ENCODE measurements at regions of chr12 and their contacts with region 1.

Region 1: DNA sequence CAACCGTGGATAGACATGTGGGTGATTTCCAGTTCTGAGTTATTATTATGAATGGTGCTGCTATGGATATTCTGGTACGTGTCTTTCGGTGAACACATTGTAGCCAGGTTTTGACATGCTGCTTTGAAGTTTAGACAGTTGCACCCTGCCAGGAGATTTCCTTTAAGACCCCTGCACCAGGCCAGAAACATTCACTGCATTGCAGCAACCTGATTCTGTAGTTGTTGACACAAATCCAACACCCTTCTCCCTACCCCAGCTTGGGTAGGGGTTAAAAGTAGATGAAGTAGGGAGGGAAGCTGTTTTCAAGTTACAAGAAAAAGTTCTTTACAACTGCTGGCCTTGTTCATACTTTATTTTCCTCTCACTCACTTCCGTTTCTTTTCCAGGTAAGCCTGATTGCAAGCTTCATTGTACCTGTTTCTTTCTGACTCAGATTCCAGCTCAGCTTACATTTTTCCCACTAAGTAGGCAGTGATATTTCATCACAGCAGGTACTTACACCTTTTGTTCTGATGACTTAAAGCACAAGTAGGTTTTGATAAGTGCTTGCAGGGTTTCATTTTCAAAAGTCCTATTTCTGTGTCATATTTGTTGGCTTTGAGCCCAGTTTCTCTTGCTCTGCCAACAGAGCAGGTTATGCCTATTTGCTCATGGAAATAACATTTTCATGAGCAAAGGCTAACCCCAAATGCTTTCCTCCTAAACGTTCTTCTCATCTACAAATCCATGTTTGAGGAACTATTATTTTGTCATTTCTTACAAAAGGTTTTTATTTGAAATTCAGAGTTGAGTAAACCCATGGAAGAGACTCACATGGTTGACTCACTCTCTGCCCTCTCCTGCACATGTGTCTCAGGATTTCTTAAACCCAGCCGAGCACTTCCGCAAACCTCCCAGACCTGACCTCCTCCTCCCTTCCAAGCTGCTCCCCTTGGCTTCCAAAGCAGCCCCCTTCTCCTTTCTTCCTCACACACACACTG is 12.1 kb upstream of the LTA4H start:
- DNase-seq: peak; percentile 36
- H3K4me3 Mint-ChIP-seq: peak overlapping the region; percentile 31
- H3K27ac Mint-ChIP-seq: peak overlapping the region; percentile 92
- H3K4me1 Mint-ChIP-seq: peaks cover 53% of the 10 kb centered on the region
- H3K27me3 Mint-ChIP-seq: no peaks in the 10 kb centered on the region

Region 2: GRCh38 chr12:95102916-95103671 is 944.4 kb before region 1 on chr12:
- CTCF ChIA-PET with region 1: no interaction called
- POLR2A ChIA-PET with region 1: no interaction called
- intact Hi-C with region 1: loop called (anchors 1 kb)
- DNase-seq: peak; percentile 68
- H3K4me3 Mint-ChIP-seq: no peak overlapping the region
- H3K27ac Mint-ChIP-seq: peak overlapping the region; percentile 63
- H3K4me1 Mint-ChIP-seq: peaks cover 19% of the 10 kb centered on the region
- H3K27me3 Mint-ChIP-seq: no peaks in the 10 kb centered on the region

Region 3: GRCh38 chr12:95460896-95461661 is 586.4 kb before region 1 on chr12:
- CTCF ChIA-PET with region 1: no interaction called
- POLR2A ChIA-PET with region 1: no interaction called
- intact Hi-C with region 1: no loop called
- DNase-seq: no peak
- H3K4me3 Mint-ChIP-seq: no peak overlapping the region
- H3K27ac Mint-ChIP-seq: no peak overlapping the region
- H3K4me1 Mint-ChIP-seq: no peaks in the 10 kb centered on the region
- H3K27me3 Mint-ChIP-seq: no peaks in the 10 kb centered on the region

Region 4: DNA sequence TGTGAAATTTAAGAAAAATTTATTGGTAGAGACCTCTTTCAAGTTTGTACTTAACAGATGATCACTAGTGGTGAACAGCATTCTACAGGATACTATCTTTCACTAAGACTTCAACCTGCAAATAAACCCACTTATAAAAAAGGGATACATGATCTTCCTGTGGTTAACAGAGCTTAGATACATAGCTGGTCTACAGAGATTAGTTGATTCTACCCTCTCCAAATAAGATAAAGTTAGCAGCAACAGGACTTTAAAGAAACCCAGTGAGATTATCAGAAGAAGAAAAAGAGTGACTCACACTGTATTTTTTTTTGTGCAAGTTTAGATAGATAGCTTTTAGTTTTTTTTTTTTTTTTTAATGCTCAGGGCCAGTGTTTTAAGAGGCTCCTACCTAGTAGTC is 530.8 kb before region 1 on chr12:
- CTCF ChIA-PET with region 1: no interaction called
- POLR2A ChIA-PET with region 1: no interaction called
- intact Hi-C with region 1: no loop called
- DNase-seq: no peak
- H3K4me3 Mint-ChIP-seq: no peak overlapping the region
- H3K27ac Mint-ChIP-seq: peak overlapping the region; percentile 28
- H3K4me1 Mint-ChIP-seq: peaks cover 2% of the 10 kb centered on the region
- H3K27me3 Mint-ChIP-seq: no peaks in the 10 kb centered on the region

Region 5: GRCh38 chr12:96025518-96025917 is 22.0 kb before region 1 on chr12:
- CTCF ChIA-PET with region 1: no interaction called
- POLR2A ChIA-PET with region 1: no interaction called
- intact Hi-C with region 1: no loop called
- DNase-seq: no peak
- H3K4me3 Mint-ChIP-seq: no peak overlapping the region
- H3K27ac Mint-ChIP-seq: no peak overlapping the region
- H3K4me1 Mint-ChIP-seq: peaks cover 7% of the 10 kb centered on the region
- H3K27me3 Mint-ChIP-seq: no peaks in the 10 kb centered on the region

Region 6: GRCh38 chr12:96035278-96036236 is 12.0 kb before region 1 on chr12 and contains the start of gene LTA4H:
- CTCF ChIA-PET with region 1: no interaction called
- POLR2A ChIA-PET with region 1: interaction called, 3 read pairs
- intact Hi-C with region 1: loop called (anchors 1 kb)
- DNase-seq: peak; percentile 97
- H3K4me3 Mint-ChIP-seq: no peak within 1 kb of the TSS
- H3K27ac Mint-ChIP-seq: no peak within 1 kb of the TSS
- H3K4me1 Mint-ChIP-seq: peaks cover 13% of the 10 kb centered on the region
- H3K27me3 Mint-ChIP-seq: no peaks in the 10 kb centered on the region
- total RNA-seq, gene LTA4H: 106 to 110 TPM

Region 7: GRCh38 chr12:96194971-96195844 is 147.7 kb after region 1 on chr12:
- CTCF ChIA-PET with region 1: no interaction called
- POLR2A ChIA-PET with region 1: interaction called, 8 read pairs
- intact Hi-C with region 1: loop called (anchors 1 kb)
- DNase-seq: peak; percentile 87
- H3K4me3 Mint-ChIP-seq: peak overlapping the region; percentile 93
- H3K27ac Mint-ChIP-seq: peak overlapping the region; percentile 99
- H3K4me1 Mint-ChIP-seq: peaks cover 45% of the 10 kb centered on the region
- H3K27me3 Mint-ChIP-seq: no peaks in the 10 kb centered on the region

Region 8: GRCh38 chr12:96219698-96220206 is 172.2 kb after region 1 on chr12:
- CTCF ChIA-PET with region 1: interaction called, 9 read pairs
- POLR2A ChIA-PET with region 1: interaction called, 3 read pairs
- intact Hi-C with region 1: loop called (anchors 1 kb)
- DNase-seq: peak; percentile 36
- H3K4me3 Mint-ChIP-seq: no peak overlapping the region
- H3K27ac Mint-ChIP-seq: peak overlapping the region; percentile 14
- H3K4me1 Mint-ChIP-seq: peaks cover 53% of the 10 kb centered on the region
- H3K27me3 Mint-ChIP-seq: no peaks in the 10 kb centered on the region

Region 9: DNA sequence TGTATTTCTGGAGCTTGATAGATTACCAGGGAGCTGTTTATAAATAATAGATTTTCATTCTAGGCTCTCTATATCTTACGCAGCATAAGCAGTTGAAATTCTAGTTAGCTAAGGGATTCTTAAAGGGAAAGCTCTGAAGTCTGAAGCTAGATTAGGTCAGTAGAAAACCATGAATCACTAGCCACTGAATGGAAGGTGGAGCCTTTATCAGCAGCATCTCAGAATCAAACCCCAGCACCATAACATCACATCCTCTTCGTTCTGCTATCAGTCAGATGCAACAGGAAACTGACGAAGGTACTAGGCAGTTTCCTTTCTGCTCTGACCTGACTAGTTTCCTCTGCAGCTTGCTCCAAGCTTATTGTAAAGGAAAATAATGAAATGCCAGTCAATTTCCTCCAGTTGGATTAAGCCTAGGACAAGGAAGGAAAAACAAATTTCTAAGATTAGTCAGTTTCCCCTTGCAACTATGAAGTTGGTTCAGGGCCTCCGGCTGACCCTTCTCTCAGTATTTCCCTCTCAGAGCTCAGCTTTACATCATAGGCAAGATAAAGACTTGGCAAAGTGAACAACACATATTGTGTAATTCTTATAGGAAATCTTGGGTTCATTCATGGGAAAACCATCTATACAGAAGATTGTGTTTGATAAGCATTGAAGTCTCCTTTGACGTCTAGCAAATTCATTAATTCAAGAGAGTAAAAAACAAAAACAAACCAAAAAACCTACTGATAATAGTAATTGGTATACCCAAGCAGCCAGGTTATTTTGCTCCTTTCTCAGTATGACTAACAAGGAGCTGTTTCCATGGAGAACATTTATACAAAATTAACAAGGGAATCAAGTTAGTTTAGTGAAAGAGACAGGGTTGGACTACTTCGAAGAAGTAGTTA is 398.4 kb after region 1 on chr12:
- CTCF ChIA-PET with region 1: interaction called, 3 read pairs
- POLR2A ChIA-PET with region 1: no interaction called
- intact Hi-C with region 1: loop called (anchors 1 kb)
- DNase-seq: peak; percentile 72
- H3K4me3 Mint-ChIP-seq: peak overlapping the region; percentile 60
- H3K27ac Mint-ChIP-seq: peak overlapping the region; percentile 95
- H3K4me1 Mint-ChIP-seq: peaks cover 38% of the 10 kb centered on the region
- H3K27me3 Mint-ChIP-seq: no peaks in the 10 kb centered on the region

Region 10: GRCh38 chr12:96501139-96501761 is 453.7 kb after region 1 on chr12:
- CTCF ChIA-PET with region 1: no interaction called
- POLR2A ChIA-PET with region 1: no interaction called
- intact Hi-C with region 1: loop called (anchors 5 kb)
- DNase-seq: peak; percentile 56
- H3K4me3 Mint-ChIP-seq: no peak overlapping the region
- H3K27ac Mint-ChIP-seq: peak overlapping the region; percentile 84
- H3K4me1 Mint-ChIP-seq: peaks cover 39% of the 10 kb centered on the region
- H3K27me3 Mint-ChIP-seq: no peaks in the 10 kb centered on the region

Measured in activated CD4-positive, alpha-beta memory T cell treated with anti-CD3 and anti-CD28 coated beads for 36 hours (primary cell).